Breast epithelium (tissue), 4 donors: ENCODE measurements at regions of chr2 and their contacts with region 1.

Region 1: DNA sequence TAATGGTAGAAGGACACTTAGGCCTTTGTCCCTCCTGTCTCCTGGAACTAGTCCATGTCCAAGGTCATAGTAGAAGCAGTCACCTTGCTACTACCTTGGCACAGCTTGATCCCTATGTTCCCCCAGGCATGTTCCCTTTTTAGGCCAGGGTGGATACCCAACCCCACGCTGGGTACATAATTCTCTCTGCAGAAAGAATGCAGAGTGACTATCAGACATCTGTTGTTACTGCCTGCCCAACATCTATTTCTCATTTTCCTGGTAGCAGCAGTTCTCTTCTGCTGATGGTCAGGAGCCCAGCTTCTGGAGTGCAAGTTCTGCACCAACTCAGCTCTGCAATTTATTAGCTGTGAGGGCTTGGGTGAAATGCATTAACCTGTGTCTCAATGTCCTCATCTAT is 4.4 kb upstream of the METTL21A start:
- DNase-seq: no peak
- H3K4me3 ChIP-seq: no peak overlapping the region
- H3K27ac ChIP-seq: no peak overlapping the region
- H3K4me1 ChIP-seq: peaks cover 0 to 6% of the 10 kb centered on the region in 2 donors
- H3K27me3 ChIP-seq: no peaks in the 10 kb centered on the region
- CTCF ChIP-seq: no peak
- POLR2A ChIP-seq: no peak

Region 2: GRCh38 chr2:207681431-207681830 is 51.9 kb after region 1 on chr2:
- intact Hi-C with region 1: loop called (anchors 2 kb)
- DNase-seq: no peak
- H3K4me3 ChIP-seq: peak overlapping the region in 1 of 3 donors; percentile 33
- H3K27ac ChIP-seq: no peak overlapping the region
- H3K4me1 ChIP-seq: no peaks in the 10 kb centered on the region
- H3K27me3 ChIP-seq: peaks cover 0 to 8% of the 10 kb centered on the region in 2 donors
- CTCF ChIP-seq: no peak
- POLR2A ChIP-seq: no peak